ENCODE measurements at regions of chr2 and their contacts with region 1.

Region 1: GRCh38 chr2:237572021-237572741 is 5.8 kb downstream of the PRLH start:
- DNase-seq: peak; percentile 91
- H3K4me3 ChIP-seq: no peak overlapping the region
- H3K27ac ChIP-seq: no peak overlapping the region
- H3K4me1 ChIP-seq: no peaks in the 10 kb centered on the region
- H3K27me3 ChIP-seq: no peaks in the 10 kb centered on the region
- CTCF ChIP-seq: peak; percentile 98

Region 2: DNA sequence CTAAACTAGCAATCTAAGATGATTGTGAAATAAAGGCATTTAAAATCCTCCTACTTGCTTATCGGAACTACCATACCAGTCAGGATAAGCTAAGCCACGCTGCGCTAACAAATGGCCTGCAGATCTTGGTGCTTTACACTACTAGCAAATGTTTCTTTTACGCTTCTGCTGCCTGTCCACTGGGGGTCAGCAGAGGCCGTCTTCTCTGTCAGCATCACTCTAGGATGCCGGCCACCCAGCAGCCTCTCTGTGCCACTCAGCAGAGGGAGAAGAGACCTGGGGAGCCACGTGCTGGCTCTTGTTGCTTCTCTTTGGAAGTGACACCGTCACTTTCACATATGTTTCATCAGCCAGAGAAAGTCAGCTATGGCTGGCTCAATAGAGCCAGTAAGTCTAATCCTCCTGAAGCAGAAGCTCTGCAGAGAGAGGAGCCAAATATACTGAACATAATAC is 449.9 kb before region 1 on chr2:
- intact Hi-C with region 1: loop called (anchors 10 kb)
- DNase-seq: peak; percentile 57
- H3K4me3 ChIP-seq: no peak overlapping the region
- H3K27ac ChIP-seq: no peak overlapping the region
- H3K4me1 ChIP-seq: no peaks in the 10 kb centered on the region
- H3K27me3 ChIP-seq: no peaks in the 10 kb centered on the region
- CTCF ChIP-seq: peak; percentile 56

Region 3: DNA sequence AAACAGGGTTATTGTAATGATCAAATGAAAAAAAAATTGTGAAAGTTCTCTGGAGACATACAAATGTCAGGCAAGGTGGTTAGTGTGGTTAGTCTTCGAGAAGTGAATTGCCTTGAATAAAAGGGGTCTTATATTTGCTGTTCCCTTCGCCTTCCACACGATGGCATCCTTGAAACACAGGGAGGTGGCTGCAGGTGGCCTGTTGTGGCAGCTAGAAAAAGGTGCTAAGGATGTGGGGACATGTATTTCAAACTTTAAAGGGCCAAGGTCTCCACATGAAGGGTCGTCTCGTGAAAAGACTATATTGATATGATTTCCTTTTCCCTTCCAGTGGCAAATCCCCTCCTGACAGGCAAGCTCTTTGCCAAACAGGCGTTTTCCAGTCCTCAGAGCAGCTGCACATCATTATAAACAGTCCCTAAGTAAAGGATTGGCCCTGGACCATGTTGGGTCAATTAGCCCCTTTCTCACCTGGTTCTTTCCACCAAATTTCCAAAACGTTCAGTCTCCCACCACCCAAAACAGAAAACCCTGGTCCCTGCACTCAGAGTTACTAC is 418.0 kb before region 1 on chr2:
- intact Hi-C with region 1: loop called (anchors 10 kb)
- DNase-seq: no peak
- H3K4me3 ChIP-seq: no peak overlapping the region
- H3K27ac ChIP-seq: no peak overlapping the region
- H3K4me1 ChIP-seq: no peaks in the 10 kb centered on the region
- H3K27me3 ChIP-seq: no peaks in the 10 kb centered on the region
- CTCF ChIP-seq: peak; percentile 33

Region 4: GRCh38 chr2:237421542-237422116 is 150.6 kb before region 1 on chr2:
- intact Hi-C with region 1: loop called (anchors 1 kb)
- DNase-seq: peak; percentile 80
- H3K4me3 ChIP-seq: no peak overlapping the region
- H3K27ac ChIP-seq: no peak overlapping the region
- H3K4me1 ChIP-seq: no peaks in the 10 kb centered on the region
- H3K27me3 ChIP-seq: no peaks in the 10 kb centered on the region
- CTCF ChIP-seq: peak; percentile 66

Region 5: GRCh38 chr2:237474931-237475703 is 97.1 kb before region 1 on chr2:
- intact Hi-C with region 1: loop called (anchors 2 kb)
- DNase-seq: peak; percentile 80
- H3K4me3 ChIP-seq: peak overlapping the region; percentile 60
- H3K27ac ChIP-seq: peak overlapping the region; percentile 81
- H3K4me1 ChIP-seq: no peaks in the 10 kb centered on the region
- H3K27me3 ChIP-seq: no peaks in the 10 kb centered on the region
- CTCF ChIP-seq: peak; percentile 87

Region 6: GRCh38 chr2:237512774-237513466 is 59.3 kb before region 1 on chr2:
- intact Hi-C with region 1: loop called (anchors 2 kb)
- DNase-seq: peak; percentile 88
- H3K4me3 ChIP-seq: no peak overlapping the region
- H3K27ac ChIP-seq: no peak overlapping the region
- H3K4me1 ChIP-seq: peaks cover 5% of the 10 kb centered on the region
- H3K27me3 ChIP-seq: no peaks in the 10 kb centered on the region
- CTCF ChIP-seq: peak; percentile 78